MCF 10A (cell line): ENCODE measurements at regions of chr6 and their contacts with region 1.

Region 1: GRCh38 chr6:117449549-117450439 is 24.1 kb upstream of the ROS1 start:
- DNase-seq: peak; percentile 78
- H3K4me3 Mint-ChIP-seq: no peak overlapping the region
- H3K27ac Mint-ChIP-seq: peak overlapping the region; percentile 82
- H3K4me1 Mint-ChIP-seq: peaks cover 43% of the 10 kb centered on the region
- H3K27me3 Mint-ChIP-seq: no peaks in the 10 kb centered on the region
- CTCF ChIP-seq: peak; percentile 65

Region 2: DNA sequence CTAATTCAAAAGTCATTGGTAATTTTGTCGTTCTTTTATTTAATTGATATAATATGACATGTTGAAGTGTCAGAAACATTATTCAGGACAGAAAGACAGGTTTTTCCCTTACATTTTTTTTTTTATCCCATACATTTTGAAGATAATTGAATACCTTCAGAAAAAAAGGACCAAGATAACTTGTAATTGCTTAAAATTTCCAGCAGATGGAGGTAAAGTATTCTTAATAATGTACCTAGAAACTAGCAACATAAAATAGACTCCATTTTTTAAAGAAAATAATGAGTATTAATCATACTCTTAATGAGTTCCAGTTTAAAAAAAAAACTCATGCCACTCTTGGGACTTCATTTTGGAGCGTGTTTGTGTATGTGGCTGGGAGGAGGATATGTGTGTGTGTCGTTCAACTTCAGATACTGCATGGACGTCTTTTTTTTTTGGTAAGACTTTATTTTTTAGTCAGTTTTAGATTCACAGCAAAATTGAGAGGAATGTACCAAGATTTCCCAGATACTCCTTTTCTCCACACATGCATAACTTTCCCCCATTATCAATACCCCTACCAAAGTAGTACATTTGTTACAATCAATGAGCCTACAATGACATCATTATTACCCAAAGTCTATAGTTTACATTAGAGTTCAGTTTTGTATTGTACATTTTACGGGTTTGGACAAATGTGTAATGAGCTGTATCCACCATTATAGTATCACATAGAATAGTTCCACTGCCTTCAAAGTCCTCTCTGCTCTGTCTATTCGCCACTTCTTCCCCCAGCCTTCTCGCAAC is 103.5 kb before region 1 on chr6:
- CTCF ChIA-PET with region 1: interaction called, 15 read pairs
- POLR2A ChIA-PET with region 1: no interaction called
- intact Hi-C with region 1: loop called (anchors 5 kb)
- DNase-seq: peak; percentile 16
- H3K4me3 Mint-ChIP-seq: no peak overlapping the region
- H3K27ac Mint-ChIP-seq: no peak overlapping the region
- H3K4me1 Mint-ChIP-seq: peaks cover 6% of the 10 kb centered on the region
- H3K27me3 Mint-ChIP-seq: no peaks in the 10 kb centered on the region
- CTCF ChIP-seq: peak; percentile 38

Region 3: GRCh38 chr6:117399924-117400323 is 49.9 kb before region 1 on chr6:
- CTCF ChIA-PET with region 1: interaction called, 98 read pairs
- POLR2A ChIA-PET with region 1: interaction called, 6 read pairs
- intact Hi-C with region 1: loop called (anchors 1 kb)
- DNase-seq: peak; percentile 38
- H3K4me3 Mint-ChIP-seq: no peak overlapping the region
- H3K27ac Mint-ChIP-seq: no peak overlapping the region
- H3K4me1 Mint-ChIP-seq: peaks cover 7% of the 10 kb centered on the region
- H3K27me3 Mint-ChIP-seq: no peaks in the 10 kb centered on the region
- CTCF ChIP-seq: peak; percentile 27

Region 4: GRCh38 chr6:117482240-117483003 is 32.6 kb after region 1 on chr6 and contains the start of gene DCBLD1:
- CTCF ChIA-PET with region 1: interaction called, 13 read pairs
- POLR2A ChIA-PET with region 1: interaction called, 39 read pairs
- intact Hi-C with region 1: loop called (anchors 1 kb)
- DNase-seq: peak; percentile 75
- H3K4me3 Mint-ChIP-seq: peak within 1 kb of the TSS; percentile 92
- H3K27ac Mint-ChIP-seq: peak within 1 kb of the TSS; percentile 82
- H3K4me1 Mint-ChIP-seq: peaks cover 11% of the 10 kb centered on the region
- H3K27me3 Mint-ChIP-seq: no peaks in the 10 kb centered on the region
- CTCF ChIP-seq: no peak
- total RNA-seq, gene DCBLD1: 25.4 and 26.8 TPM in 2 replicates

Region 5: DNA sequence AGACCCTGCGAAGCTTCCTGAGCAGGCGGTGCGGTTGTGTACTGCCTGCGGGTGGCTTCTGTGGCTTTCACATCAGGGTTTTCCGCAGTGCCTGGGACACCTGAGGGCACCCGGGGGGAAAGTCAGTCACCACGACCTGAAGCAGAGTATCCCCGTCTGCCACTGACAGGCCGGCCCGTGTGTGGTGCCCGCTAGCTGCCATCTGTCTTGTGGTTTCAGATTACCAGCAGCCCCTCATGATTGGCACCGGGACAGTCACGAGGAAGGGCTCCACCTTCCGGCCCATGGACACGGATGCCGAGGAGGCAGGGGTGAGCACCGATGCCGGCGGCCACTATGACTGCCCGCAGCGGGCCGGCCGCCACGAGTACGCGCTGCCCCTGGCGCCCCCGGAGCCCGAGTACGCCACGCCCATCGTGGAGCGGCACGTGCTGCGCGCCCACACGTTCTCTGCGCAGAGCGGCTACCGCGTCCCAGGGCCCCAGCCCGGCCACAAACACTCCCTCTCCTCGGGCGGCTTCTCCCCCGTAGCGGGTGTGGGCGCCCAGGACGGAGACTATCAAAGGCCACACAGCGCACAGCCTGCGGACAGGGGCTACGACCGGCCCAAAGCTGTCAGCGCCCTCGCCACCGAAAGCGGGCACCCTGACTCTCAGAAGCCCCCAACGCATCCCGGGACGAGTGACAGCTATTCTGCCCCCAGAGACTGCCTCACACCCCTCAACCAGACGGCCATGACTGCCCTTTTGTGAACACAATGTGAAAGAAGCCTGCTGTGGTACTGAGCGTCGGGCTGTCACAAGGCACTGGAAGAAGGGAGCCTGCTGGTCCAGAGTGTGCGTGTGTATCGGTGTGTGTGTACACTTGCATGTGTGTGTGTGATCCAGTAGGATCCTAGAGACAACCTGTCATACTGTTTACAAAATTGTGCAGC is 98.2 kb after region 1 on chr6:
- CTCF ChIA-PET with region 1: interaction called, 28 read pairs
- POLR2A ChIA-PET with region 1: interaction called, 16 read pairs
- intact Hi-C with region 1: no loop called
- DNase-seq: no peak
- H3K4me3 Mint-ChIP-seq: no peak overlapping the region
- H3K27ac Mint-ChIP-seq: no peak overlapping the region
- H3K4me1 Mint-ChIP-seq: peaks cover 35% of the 10 kb centered on the region
- H3K27me3 Mint-ChIP-seq: no peaks in the 10 kb centered on the region
- CTCF ChIP-seq: no peak

Region 6: DNA sequence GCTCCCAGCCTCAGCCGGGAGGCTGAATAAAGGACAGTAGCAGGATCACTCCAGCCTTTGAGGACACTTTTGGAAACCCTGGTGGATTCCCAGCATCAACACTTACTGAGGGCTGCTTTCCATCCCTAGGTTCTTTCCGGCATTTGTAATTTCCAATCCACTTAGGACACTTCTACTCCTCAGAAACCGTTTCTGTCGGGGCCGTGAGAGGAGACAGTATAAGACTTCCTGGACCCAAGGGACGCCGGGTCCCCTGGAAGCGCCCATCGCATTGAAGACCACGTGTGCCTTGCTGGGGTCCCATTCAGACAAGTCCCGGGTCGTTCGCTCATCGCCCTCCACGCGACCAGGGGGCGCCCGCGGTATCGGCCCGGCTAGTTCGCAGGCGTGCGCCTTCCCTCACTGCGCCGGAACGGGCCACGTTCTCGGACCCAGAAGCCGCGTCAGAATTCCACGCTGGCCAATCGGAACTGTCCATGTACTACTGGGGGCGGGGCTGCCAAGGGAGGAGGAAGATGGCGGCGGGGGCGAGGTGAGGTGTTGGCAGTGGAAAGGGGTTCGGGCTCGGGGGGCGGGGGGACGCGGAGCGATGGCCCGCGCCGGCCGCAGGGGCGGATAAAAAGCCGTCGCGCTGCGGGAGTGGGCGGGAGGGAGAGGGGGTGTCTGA is 225.3 kb after region 1 on chr6 and contains the start of gene NUS1:
- CTCF ChIA-PET with region 1: interaction called, 3 read pairs
- POLR2A ChIA-PET with region 1: interaction called, 3 read pairs
- intact Hi-C with region 1: loop called (anchors 10 kb)
- DNase-seq: peak; percentile 98
- H3K4me3 Mint-ChIP-seq: peak within 1 kb of the TSS; percentile 93
- H3K27ac Mint-ChIP-seq: peak within 1 kb of the TSS; percentile 82
- H3K4me1 Mint-ChIP-seq: peaks cover 45% of the 10 kb centered on the region
- H3K27me3 Mint-ChIP-seq: no peaks in the 10 kb centered on the region
- CTCF ChIP-seq: peak; percentile 62
- total RNA-seq, gene NUS1: 54.7 and 59.4 TPM in 2 replicates